T-cell (primary cell): ENCODE measurements at regions of chr7 and their contacts with region 1.

Region 1: GRCh38 chr7:139242741-139243281 is 11.8 kb downstream of the UBN2 start:
- DNase-seq: no peak
- ATAC-seq: no peak
- H3K4me3 ChIP-seq: no peak overlapping the region
- H3K4me3 Mint-ChIP-seq: no peak overlapping the region
- H3K27ac ChIP-seq: no peak overlapping the region
- H3K27ac Mint-ChIP-seq: no peak overlapping the region
- H3K4me1 ChIP-seq: no peaks in the 10 kb centered on the region
- H3K4me1 Mint-ChIP-seq: peaks cover 3 to 16% (median 4%) of the 10 kb centered on the region in 3 donors
- H3K27me3 ChIP-seq: no peaks in the 10 kb centered on the region
- H3K27me3 Mint-ChIP-seq: no peaks in the 10 kb centered on the region

Region 2: GRCh38 chr7:139230774-139231512 is 11.9 kb before region 1 on chr7 and contains the start of gene UBN2:
- CTCF ChIA-PET with region 1: no interaction called
- POLR2A ChIA-PET with region 1: no interaction called
- DNase-seq: peak; percentile 63 to 94 (median 74)
- ATAC-seq: peak; percentile 77 to 85 (median 83)
- H3K4me3 ChIP-seq: peak within 1 kb of the TSS; percentile 78 to 93
- H3K4me3 Mint-ChIP-seq: peak within 1 kb of the TSS; percentile 99 to 100 (median 100)
- H3K27ac ChIP-seq: peak within 1 kb of the TSS; percentile 72
- H3K27ac Mint-ChIP-seq: peak within 1 kb of the TSS; percentile 92 to 95
- H3K4me1 ChIP-seq: peaks cover 15 to 17% of the 10 kb centered on the region in 2 experiments
- H3K4me1 Mint-ChIP-seq: peaks cover 33 to 39% (median 35%) of the 10 kb centered on the region in 3 donors
- H3K27me3 ChIP-seq: peaks cover 0 to 5% of the 10 kb centered on the region in 2 experiments
- H3K27me3 Mint-ChIP-seq: peaks cover 0 to 4% of the 10 kb centered on the region in 2 donors
- total RNA-seq, gene UBN2: 16.1 to 21.7 (median 17.7) TPM

Region 3: GRCh38 chr7:139370301-139370942 is 127.6 kb after region 1 on chr7:
- CTCF ChIA-PET with region 1: no interaction called
- POLR2A ChIA-PET with region 1: interaction called in 1 of 2 experiments, 10 read pairs
- DNase-seq: no peak
- ATAC-seq: no peak
- H3K4me3 ChIP-seq: no peak overlapping the region
- H3K4me3 Mint-ChIP-seq: peak overlapping the region in 1 of 3 donors; percentile 22
- H3K27ac ChIP-seq: no peak overlapping the region
- H3K27ac Mint-ChIP-seq: peak overlapping the region; percentile 25 to 73
- H3K4me1 ChIP-seq: peaks cover 8 to 9% of the 10 kb centered on the region in 2 experiments
- H3K4me1 Mint-ChIP-seq: peaks cover 76 to 81% (median 79%) of the 10 kb centered on the region in 3 donors
- H3K27me3 ChIP-seq: no peaks in the 10 kb centered on the region
- H3K27me3 Mint-ChIP-seq: no peaks in the 10 kb centered on the region

Region 4: GRCh38 chr7:139495580-139496125 is 252.8 kb after region 1 on chr7:
- CTCF ChIA-PET with region 1: no interaction called
- POLR2A ChIA-PET with region 1: no interaction called
- DNase-seq: no peak
- ATAC-seq: no peak
- H3K4me3 ChIP-seq: no peak overlapping the region
- H3K4me3 Mint-ChIP-seq: no peak overlapping the region
- H3K27ac ChIP-seq: no peak overlapping the region
- H3K27ac Mint-ChIP-seq: no peak overlapping the region
- H3K4me1 ChIP-seq: peaks cover 0 to 9% of the 10 kb centered on the region in 2 experiments
- H3K4me1 Mint-ChIP-seq: peaks cover 8 to 11% (median 8%) of the 10 kb centered on the region in 3 donors
- H3K27me3 ChIP-seq: peaks cover 0 to 16% of the 10 kb centered on the region in 2 experiments
- H3K27me3 Mint-ChIP-seq: peaks cover 0 to 3% of the 10 kb centered on the region in 2 donors